ENCODE measurements at regions of chr3 and their contacts with region 1.

Region 1: DNA sequence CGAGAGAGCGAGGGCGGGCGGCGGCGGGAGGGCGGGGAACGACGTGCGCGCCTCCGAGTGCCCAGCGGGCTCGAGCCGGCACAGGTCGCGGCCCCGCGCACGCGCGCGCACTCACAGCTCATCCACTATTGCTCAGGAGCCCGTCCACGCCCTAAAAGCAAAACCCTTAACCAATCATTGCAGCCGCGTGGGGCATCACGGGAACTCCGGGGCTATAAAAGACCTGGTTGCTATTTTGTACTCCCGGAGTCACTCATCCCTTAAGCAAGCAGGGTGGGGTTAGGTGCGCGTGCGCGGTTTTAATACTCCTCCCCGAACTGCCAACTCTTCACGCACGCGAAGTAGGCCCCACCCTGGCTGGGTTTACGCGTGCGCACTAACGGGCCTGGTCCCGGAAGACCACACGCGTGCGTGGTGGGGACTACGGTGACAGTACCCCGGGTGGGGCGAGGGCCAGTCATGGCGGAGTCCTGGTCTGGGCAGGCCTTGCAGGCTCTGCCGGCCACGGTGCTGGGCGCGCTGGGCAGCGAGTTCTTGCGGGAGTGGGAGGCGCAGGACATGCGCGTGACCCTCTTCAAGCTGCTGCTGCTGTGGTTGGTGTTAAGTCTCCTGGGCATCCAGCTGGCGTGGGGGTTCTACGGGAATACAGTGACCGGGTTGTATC is at the starts of genes RHOA and TCTA:
- DNase-seq: peak; percentile 99
- H3K4me3 Mint-ChIP-seq: peak within 1 kb of the TSS; percentile 98
- H3K27ac Mint-ChIP-seq: peak within 1 kb of the TSS; percentile 96
- H3K4me1 Mint-ChIP-seq: peaks cover 71% of the 10 kb centered on the region
- H3K27me3 Mint-ChIP-seq: no peaks in the 10 kb centered on the region
- total RNA-seq, gene RHOA: 376 and 381 TPM in 2 replicates
- total RNA-seq, gene TCTA: 27.8 and 30.0 TPM in 2 replicates

Region 2: GRCh38 chr3:49021813-49022687 is 390.1 kb before region 1 on chr3 and contains the start of gene NDUFAF3:
- intact Hi-C with region 1: loop called (anchors 1 kb)
- DNase-seq: peak; percentile 91
- H3K4me3 Mint-ChIP-seq: peak within 1 kb of the TSS; percentile 91
- H3K27ac Mint-ChIP-seq: peak within 1 kb of the TSS; percentile 99
- H3K4me1 Mint-ChIP-seq: peaks cover 41% of the 10 kb centered on the region
- H3K27me3 Mint-ChIP-seq: no peaks in the 10 kb centered on the region
- total RNA-seq, gene NDUFAF3: 126 and 129 TPM in 2 replicates

Region 3: GRCh38 chr3:49358217-49358883 is 53.8 kb before region 1 on chr3 and contains the start of gene GPX1:
- intact Hi-C with region 1: loop called (anchors 1 kb)
- DNase-seq: peak; percentile 83
- H3K4me3 Mint-ChIP-seq: peak within 1 kb of the TSS; percentile 94
- H3K27ac Mint-ChIP-seq: peak within 1 kb of the TSS; percentile 90
- H3K4me1 Mint-ChIP-seq: peaks cover 27% of the 10 kb centered on the region
- H3K27me3 Mint-ChIP-seq: no peaks in the 10 kb centered on the region
- total RNA-seq, gene GPX1: 181 and 188 TPM in 2 replicates

Region 4: DNA sequence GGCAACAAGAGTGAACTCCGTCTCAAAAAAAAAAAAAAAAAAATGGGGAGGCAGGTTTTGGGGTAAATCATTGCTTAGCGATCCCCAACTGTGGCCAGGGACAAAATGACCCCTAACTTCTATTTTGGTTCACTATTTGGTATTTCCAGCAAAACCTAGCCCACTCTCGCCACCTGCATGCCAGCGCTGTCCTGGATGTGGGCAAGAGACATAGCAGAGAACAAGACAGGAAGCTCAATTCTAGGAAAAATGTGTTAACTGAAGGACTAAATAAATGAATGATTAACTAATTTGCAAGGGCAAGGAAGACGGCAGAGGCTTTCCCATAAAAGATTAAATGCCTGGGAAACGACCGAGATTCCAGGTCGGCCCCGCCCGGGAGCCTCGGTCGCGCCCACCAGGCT is 16.6 kb after region 1 on chr3:
- intact Hi-C with region 1: loop called (anchors 1 kb)
- DNase-seq: no peak
- H3K4me3 Mint-ChIP-seq: peak overlapping the region; percentile 96
- H3K27ac Mint-ChIP-seq: peak overlapping the region; percentile 94
- H3K4me1 Mint-ChIP-seq: peaks cover 23% of the 10 kb centered on the region
- H3K27me3 Mint-ChIP-seq: no peaks in the 10 kb centered on the region

Region 5: DNA sequence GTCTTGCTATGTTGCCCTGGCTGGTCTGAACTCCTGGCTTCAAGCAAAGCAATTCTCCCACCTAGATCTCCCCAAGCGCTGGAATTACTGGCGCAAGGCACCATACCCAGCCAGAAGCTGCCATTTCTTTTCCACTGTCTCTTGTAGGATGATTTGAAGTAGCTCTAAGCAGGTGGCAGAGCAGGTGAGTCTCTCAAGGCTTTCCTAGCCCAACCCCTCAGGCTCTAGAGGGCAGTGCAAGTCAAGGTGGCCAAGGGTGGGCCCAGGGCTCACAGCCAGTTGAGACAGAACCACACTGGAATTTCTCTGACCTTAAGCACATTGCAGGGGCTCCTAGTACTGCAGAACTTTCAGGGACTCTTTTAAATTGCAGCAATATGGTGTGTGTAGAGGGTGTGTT is 42.4 kb after region 1 on chr3:
- intact Hi-C with region 1: loop called (anchors 1 kb)
- DNase-seq: no peak
- H3K4me3 Mint-ChIP-seq: no peak overlapping the region
- H3K27ac Mint-ChIP-seq: no peak overlapping the region
- H3K4me1 Mint-ChIP-seq: no peaks in the 10 kb centered on the region
- H3K27me3 Mint-ChIP-seq: no peaks in the 10 kb centered on the region

Region 6: GRCh38 chr3:49500732-49501609 is 88.9 kb after region 1 on chr3:
- intact Hi-C with region 1: no loop called
- DNase-seq: no peak
- H3K4me3 Mint-ChIP-seq: no peak overlapping the region
- H3K27ac Mint-ChIP-seq: peak overlapping the region; percentile 42
- H3K4me1 Mint-ChIP-seq: peaks cover 17% of the 10 kb centered on the region
- H3K27me3 Mint-ChIP-seq: no peaks in the 10 kb centered on the region

Measured in activated T-helper 1 cell treated with anti-CD3 and anti-CD28 coated beads, Interleukin-12 subunit alpha, Interleukin-12 subunit beta, Interleukin-2, Interleukin-4 antibody, amounts not matched to agents 30 ng/mL and 10 ng/mL and 1 ng/mL, durations not matched to agents 14 hours and 24 hours and 36 hours (primary cell).